GM23248 (cell line): ENCODE measurements at regions of chr11 and their contacts with region 1.

Region 1: DNA sequence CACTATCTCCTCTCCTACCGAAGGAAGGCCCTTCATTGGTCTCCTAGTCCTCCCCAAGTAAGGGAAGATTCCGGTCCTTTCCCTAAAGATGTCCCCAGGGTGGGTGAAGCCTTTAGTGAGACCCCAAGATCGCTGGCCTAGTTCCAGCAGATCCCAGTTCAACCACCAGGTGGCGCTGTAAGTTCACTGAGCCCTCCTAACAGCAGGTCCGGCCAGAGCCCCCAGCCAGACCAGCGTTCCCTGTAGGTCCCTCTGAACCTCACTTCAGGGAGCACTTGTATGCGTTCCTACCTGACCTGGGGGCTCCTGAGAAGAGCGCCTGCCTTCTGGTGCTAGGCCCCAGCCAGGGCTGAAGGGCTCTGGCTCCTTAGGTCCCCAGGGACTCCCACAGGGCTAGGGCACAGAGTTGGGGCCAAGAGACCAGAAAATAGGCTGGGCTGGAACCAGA is 38.1 kb downstream of the LMO1 start:
- DNase-seq: peak; percentile 69
- H3K4me3 ChIP-seq: no peak overlapping the region
- H3K27ac ChIP-seq: no peak overlapping the region
- H3K4me1 ChIP-seq: no peaks in the 10 kb centered on the region
- H3K27me3 ChIP-seq: no peaks in the 10 kb centered on the region

Region 2: DNA sequence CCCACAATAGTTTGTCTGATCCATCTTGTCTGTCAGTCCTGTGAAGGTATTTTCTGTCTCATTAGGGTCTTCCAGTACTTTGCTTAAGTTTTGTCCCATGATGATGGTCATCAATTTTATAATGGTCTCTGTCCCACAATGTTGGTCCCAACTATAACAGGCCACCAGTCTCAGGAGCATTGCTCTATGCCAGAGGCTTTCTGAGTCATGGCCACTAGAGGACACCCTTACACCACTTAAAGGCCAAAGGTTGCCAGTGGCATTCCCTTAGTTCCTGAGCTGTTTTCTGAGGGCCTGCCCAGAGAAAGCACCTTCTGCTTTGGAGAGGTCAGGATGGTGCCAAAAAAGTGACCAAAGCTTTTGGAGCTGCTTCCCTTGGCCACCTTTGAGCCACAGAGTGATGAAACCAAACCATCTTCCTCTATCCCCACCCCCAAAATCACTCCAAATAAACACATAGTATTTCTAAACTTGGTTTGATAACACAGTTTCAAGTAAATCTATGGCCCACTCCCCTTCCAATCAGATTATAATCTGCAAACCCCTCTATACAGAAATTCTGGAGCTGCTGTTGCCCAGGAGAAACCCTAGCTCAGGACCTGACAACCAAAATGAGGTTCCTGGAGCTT is 219.2 kb before region 1 on chr11:
- in situ Hi-C with region 1: no loop called
- DNase-seq: peak; percentile 84
- H3K4me3 ChIP-seq: no peak overlapping the region
- H3K27ac ChIP-seq: no peak overlapping the region
- H3K4me1 ChIP-seq: peaks cover 5% of the 10 kb centered on the region
- H3K27me3 ChIP-seq: no peaks in the 10 kb centered on the region

Region 3: GRCh38 chr11:8566613-8567210 is 341.1 kb after region 1 on chr11:
- in situ Hi-C with region 1: loop called (anchors 25 kb)
- DNase-seq: peak; percentile 59
- H3K4me3 ChIP-seq: no peak overlapping the region
- H3K27ac ChIP-seq: no peak overlapping the region
- H3K4me1 ChIP-seq: peaks cover 9% of the 10 kb centered on the region
- H3K27me3 ChIP-seq: peaks cover 36% of the 10 kb centered on the region

Region 4: DNA sequence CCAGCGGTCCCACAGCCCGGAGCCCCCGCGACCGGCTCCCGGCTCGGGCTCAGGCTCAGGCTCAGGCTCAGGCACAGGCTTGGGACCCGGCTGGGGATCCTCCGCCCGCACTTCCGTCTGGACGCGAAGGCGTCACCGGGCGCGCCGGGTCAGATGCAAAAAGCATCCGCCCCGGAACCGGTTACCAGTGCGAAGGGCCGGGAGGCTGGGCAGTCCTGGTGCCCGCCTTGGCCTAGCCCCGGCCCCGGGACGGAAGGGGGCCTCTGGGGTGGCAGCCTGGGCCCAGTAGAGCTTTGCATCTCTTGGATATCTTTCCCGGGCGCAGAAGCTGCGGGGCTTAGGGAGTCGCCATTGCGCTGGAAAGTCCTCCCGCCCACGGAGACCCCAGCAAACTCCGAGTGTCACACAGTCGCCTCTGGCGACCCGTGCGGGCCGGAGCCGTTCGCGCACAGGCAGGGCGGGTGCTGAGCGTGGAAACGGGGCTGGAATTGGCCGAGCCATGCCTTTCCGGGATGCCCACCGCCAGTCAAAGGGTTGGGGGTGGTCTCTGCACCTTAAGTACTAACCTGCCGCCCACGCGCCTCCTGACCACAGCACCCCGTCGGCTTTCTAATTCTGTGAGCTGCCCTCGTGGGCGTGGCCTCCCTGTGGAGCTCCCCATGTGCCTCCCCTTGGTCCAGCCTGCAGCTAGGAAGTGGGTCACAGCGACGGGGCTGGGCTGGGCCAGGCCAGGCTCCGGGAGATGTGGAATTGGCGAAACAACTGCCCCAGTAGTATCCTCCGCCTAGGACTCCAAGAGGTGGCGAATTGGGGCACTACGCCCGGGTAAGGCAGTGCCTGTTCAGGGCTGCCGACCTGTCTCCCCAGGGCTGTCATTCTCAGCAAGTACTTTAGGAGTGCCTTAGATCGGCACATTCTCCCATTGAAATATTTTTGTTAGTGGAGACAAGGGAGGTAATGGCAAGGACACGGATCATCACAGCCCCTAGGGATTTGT is 739.0 kb after region 1 on chr11 and contains the start of gene TMEM9B:
- in situ Hi-C with region 1: loop called (anchors 25 kb)
- DNase-seq: peak; percentile 98
- H3K4me3 ChIP-seq: peak within 1 kb of the TSS; percentile 81
- H3K27ac ChIP-seq: peak within 1 kb of the TSS; percentile 83
- H3K4me1 ChIP-seq: peaks cover 12% of the 10 kb centered on the region
- H3K27me3 ChIP-seq: no peaks in the 10 kb centered on the region
- total RNA-seq, gene TMEM9B: 76.6 and 83.4 TPM in 2 replicates